ENCODE measurements at regions of chr17 and their contacts with region 1.

Region 1: DNA sequence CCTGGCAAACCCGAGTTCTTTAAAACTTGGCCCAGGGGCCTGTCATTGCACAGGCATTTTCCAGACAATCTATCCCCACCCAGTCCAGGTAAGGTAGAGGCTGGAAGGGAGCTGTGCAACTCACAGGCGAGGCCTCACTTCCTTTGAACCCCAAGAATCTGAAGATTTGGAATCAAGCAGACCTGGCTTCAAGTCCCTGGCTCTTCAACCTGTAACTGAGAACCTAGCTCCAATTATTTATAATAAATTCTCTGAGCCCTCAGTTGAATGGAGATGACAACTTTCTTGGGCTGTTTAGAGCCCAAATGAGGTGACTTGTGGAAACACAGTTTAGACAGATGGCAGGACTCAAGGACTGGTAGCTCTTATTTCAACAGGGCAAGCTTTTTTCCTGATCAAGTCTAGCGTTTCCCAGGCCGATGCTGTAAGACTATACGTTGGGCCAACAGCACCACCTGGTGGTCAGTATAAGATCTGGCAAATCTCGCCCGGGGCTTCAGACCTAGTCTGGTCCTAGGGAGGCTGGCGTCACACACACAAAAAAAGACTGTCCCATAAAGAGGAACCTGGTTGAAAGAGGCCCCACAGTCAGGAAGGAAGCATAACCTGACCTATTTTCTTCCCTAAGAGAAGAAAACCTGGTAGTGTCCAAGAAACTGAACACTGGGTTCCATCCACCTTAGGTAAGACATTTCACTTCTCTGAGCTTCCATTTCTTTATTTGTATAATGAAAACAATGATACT is 117.9 kb downstream of the C17orf67 start:
- DNase-seq: peak; percentile 92
- H3K4me3 ChIP-seq: no peak overlapping the region
- H3K27ac ChIP-seq: no peak overlapping the region
- H3K4me1 ChIP-seq: no peaks in the 10 kb centered on the region
- H3K27me3 ChIP-seq: no peaks in the 10 kb centered on the region

Region 2: GRCh38 chr17:56451629-56452028 is 264.2 kb before region 1 on chr17:
- in situ Hi-C with region 1: no loop called
- DNase-seq: peak; percentile 39
- H3K4me3 ChIP-seq: no peak overlapping the region
- H3K27ac ChIP-seq: no peak overlapping the region
- H3K4me1 ChIP-seq: no peaks in the 10 kb centered on the region
- H3K27me3 ChIP-seq: no peaks in the 10 kb centered on the region

Region 3: GRCh38 chr17:56592487-56593085 is 123.2 kb before region 1 on chr17:
- in situ Hi-C with region 1: loop called (anchors 10 kb)
- DNase-seq: peak; percentile 75
- H3K4me3 ChIP-seq: peak overlapping the region; percentile 76
- H3K27ac ChIP-seq: no peak overlapping the region
- H3K4me1 ChIP-seq: peaks cover 8% of the 10 kb centered on the region; the same call in 1 of the 2 replicates
- H3K27me3 ChIP-seq: peaks cover 25% of the 10 kb centered on the region

Region 4: GRCh38 chr17:56661916-56662315 is 53.9 kb before region 1 on chr17:
- in situ Hi-C with region 1: no loop called
- DNase-seq: no peak
- H3K4me3 ChIP-seq: no peak overlapping the region
- H3K27ac ChIP-seq: no peak overlapping the region
- H3K4me1 ChIP-seq: no peaks in the 10 kb centered on the region
- H3K27me3 ChIP-seq: peaks cover 17% of the 10 kb centered on the region

Measured in GM23248 (cell line).